ENCODE measurements at regions of chr2 and their contacts with region 1.

Region 1: DNA sequence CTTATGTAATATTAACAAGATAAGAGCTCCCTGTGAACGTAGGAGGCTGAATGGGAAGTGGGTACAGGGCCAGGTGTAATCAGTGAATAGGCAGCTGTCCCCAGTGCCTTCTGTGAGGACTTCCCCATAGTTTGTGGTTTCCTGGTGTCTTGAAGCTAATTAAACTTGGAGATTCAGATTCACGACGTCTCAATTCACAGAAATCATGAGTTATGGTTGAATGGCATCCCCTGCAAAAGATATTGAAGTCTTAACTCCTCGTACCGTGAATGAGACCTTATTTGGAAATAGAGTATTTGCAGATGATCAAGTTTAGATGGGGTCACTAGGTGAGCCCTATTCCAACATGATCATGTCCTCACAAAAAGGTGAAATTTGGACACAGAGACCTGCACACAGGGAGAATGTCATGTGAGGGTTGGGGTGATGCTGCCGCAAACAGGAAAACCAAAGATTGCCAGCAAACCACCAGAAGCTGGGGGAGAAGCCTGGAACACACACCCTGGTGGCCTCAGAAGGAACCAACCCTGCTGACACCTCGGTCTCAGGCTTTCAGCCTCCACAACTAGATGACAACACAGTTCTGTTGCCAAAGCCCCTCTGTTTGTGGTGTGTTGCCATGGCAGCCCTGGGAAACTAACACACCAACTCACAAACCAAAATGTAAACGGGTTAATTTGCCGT is 13.2 kb downstream of the ARL4C start:
- DNase-seq: peak; percentile 75 to 83 (median 80)
- H3K4me3 ChIP-seq: no peak overlapping the region
- H3K4me3 Mint-ChIP-seq: peak overlapping the region in 1 of 2 donors; percentile 51
- H3K27ac ChIP-seq: peak overlapping the region in 1 of 2 donors; percentile 15
- H3K27ac Mint-ChIP-seq: peak overlapping the region; percentile 42 to 84 (median 65)
- H3K4me1 ChIP-seq: peaks cover 32 to 35% of the 10 kb centered on the region in 2 donors
- H3K4me1 Mint-ChIP-seq: peaks cover 32% of the 10 kb centered on the region
- H3K27me3 ChIP-seq: peaks cover 2 to 4% of the 10 kb centered on the region in 2 donors
- H3K27me3 Mint-ChIP-seq: peaks cover 13 to 19% (median 15%) of the 10 kb centered on the region in 3 donors
- CTCF ChIP-seq: peak; percentile 68

Region 2: GRCh38 chr2:234446404-234447076 is 37.2 kb before region 1 on chr2:
- intact Hi-C with region 1: loop called in 1 of 2 experiments (anchors 5 kb)
- DNase-seq: peak; percentile 97 to 99 (median 97)
- H3K4me3 ChIP-seq: no peak overlapping the region
- H3K4me3 Mint-ChIP-seq: peak overlapping the region; percentile 32 to 55
- H3K27ac ChIP-seq: peak overlapping the region; percentile 95 to 98
- H3K27ac Mint-ChIP-seq: peak overlapping the region; percentile 98 to 99 (median 99)
- H3K4me1 ChIP-seq: peaks cover 34 to 40% of the 10 kb centered on the region in 2 donors
- H3K4me1 Mint-ChIP-seq: peaks cover 35% of the 10 kb centered on the region
- H3K27me3 ChIP-seq: no peaks in the 10 kb centered on the region
- H3K27me3 Mint-ChIP-seq: peaks cover 0 to 4% (median 2%) of the 10 kb centered on the region in 3 donors
- CTCF ChIP-seq: no peak

Region 3: DNA sequence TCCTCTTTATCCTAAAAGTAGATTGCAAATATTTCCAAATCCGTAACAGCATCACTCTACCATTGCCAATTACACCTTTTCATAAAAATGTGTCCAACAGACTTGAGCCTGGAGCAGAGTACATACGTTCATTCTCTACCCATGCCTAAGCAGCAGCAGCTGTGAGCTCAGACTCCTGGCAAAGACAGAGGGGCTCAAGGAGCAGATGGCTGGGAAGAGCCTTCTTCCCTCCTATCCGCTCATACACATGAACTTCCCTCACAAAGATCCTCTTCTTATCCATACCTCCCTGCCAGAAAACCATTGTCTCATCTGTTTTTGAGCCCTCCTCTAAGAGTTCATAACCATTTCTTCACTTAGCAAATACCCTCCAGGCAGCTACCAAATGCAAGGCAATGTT is 177.5 kb after region 1 on chr2:
- intact Hi-C with region 1: no loop called
- DNase-seq: no peak
- H3K4me3 ChIP-seq: no peak overlapping the region
- H3K4me3 Mint-ChIP-seq: no peak overlapping the region
- H3K27ac ChIP-seq: no peak overlapping the region
- H3K27ac Mint-ChIP-seq: no peak overlapping the region
- H3K4me1 ChIP-seq: no peaks in the 10 kb centered on the region
- H3K4me1 Mint-ChIP-seq: no peaks in the 10 kb centered on the region
- H3K27me3 ChIP-seq: no peaks in the 10 kb centered on the region
- H3K27me3 Mint-ChIP-seq: peaks cover 1 to 3% (median 2%) of the 10 kb centered on the region in 3 donors
- CTCF ChIP-seq: no peak

Measured in CD14-positive monocyte (primary cell).